Vagina (tissue), 2 donors: ENCODE measurements at regions of chr5 and their contacts with region 1.

Region 1: GRCh38 chr5:174589604-174590003 is 134.8 kb upstream of the MSX2 start:
- DNase-seq: no peak
- H3K4me3 ChIP-seq: no peak overlapping the region
- H3K27ac ChIP-seq: no peak overlapping the region
- H3K4me1 ChIP-seq: no peaks in the 10 kb centered on the region
- H3K27me3 ChIP-seq: no peaks in the 10 kb centered on the region
- CTCF ChIP-seq: no peak
- POLR2A ChIP-seq: no peak

Region 2: DNA sequence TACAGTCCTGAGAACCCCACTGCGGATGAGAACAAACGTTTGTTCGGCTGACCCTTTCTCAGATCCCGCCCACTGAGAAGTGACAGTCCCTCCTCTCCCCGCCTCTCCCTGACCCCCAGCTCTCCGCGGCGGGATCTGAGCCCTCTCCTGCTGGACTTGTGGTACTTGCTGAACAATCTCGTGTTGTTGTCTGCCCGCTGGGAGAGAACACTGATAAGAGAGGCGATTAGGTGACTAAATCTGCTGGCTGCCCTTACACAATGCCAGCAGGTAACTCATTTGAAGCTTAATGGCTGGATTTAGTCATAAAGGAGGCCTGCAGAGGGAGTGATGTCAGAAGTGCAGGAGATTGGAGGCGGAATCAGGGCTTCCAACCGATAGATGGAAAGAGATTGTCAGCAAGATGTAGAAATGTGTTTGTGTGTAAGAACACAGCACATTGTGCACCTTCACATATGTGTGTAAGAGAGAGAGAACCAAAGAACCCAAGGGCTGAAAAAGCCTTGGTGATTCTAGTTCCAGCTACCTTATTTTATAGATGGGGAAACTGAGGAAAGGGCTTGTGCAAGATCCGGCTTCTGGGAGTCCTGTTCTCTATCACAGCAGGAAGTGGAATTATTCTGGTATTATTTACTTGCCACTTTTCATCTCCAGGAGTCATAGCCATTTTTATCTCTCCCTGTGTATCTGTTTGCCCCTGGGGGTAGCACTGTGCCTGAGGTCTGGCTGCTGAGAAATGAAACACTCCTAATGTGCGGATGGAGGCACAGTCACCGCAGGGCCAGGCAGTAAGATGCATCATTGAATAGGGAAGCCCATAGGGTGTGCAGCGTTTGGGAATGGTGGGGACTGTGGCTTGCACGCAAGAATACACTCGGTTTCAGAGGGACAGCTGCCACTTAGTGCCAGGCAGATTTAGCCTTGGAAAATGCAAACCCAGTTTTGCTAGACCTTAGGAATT is 68.9 kb before region 1 on chr5:
- intact Hi-C with region 1: no loop called
- DNase-seq: no peak
- H3K4me3 ChIP-seq: no peak overlapping the region
- H3K27ac ChIP-seq: no peak overlapping the region
- H3K4me1 ChIP-seq: no peaks in the 10 kb centered on the region
- H3K27me3 ChIP-seq: no peaks in the 10 kb centered on the region
- CTCF ChIP-seq: no peak
- POLR2A ChIP-seq: no peak

Region 3: DNA sequence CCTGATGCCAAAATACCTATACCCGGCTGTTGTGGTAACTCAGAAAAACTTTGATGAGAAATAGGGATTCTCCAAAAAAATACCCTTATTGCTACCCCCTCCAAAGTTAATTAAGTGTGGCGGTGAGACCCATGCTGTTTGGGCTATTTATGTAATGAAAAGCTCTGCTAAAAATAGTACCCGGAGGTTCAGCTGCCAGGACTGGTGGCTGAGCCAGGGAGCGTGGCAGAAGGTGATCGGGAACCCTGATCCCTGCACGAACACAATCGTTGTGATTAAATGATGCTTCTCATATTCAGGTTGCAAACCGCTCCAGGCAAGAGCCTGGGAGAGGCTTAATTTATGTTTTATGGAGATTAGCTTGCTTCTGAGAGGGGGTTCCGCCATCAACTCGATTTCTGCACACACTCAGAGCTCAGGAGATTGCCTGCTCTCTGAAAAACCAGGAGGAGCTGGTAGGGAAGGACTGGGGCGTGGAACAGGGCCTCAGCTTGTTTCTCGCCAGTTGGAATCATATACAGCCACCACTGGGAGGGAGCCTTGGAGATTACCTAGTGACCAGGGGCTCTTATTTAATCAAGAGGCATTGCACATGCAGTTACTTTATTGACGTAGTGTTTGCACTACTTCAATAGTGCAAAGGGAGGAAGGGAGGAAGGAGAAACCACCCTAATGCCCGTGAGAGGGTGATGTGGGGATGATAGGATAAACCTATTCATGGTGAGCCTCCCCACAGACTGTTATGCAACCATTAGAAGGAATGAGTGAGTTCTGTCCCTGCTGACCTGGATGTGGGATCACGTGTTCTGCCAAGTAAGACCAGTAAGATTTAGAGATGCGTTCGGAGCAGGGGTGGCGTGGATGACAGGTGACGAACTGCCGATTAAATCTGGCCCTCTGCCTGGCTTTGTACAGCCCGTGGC is 1091.7 kb after region 1 on chr5:
- intact Hi-C with region 1: loop called (anchors 5 kb)
- DNase-seq: no peak
- H3K4me3 ChIP-seq: no peak overlapping the region
- H3K27ac ChIP-seq: no peak overlapping the region
- H3K4me1 ChIP-seq: no peaks in the 10 kb centered on the region
- H3K27me3 ChIP-seq: no peaks in the 10 kb centered on the region
- CTCF ChIP-seq: no peak
- POLR2A ChIP-seq: no peak